A673 (cell line): ENCODE measurements at regions of chr22 and their contacts with region 1.

Region 1: DNA sequence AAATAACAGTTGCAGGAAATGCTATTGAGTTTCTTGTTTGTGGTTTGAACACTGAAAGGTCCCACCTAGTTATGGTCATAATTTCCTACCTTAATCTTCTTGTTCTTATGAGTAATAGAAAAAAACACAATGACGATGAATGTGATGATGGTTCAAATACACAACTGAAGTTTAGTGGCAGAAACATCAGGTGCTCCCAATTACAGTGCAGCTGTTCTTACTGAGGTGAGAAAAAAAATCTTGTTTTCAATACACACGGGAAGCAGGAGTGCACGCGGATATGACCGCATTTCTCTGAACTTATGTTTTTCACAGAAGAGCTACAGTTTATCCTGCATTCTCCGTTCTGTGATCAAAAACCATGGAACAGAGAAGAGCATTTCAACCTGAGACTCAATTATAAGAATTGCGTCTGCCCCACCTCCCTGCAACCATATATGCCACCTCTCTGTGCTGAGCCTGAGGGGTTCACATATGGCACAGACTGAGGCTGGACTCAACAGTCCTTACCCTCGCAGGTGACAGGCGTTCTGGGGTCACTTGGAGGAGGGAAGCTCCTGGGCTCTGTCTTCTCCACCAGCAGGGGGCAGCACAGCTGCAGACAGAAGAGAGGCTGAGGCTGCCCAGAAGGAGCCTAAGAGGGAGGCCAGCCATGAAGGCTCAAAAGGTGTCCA is 99.7 kb upstream of the IGLL5 start:
- DNase-seq: peak; percentile 64
- H3K4me3 ChIP-seq: no peak overlapping the region
- H3K27ac ChIP-seq: no peak overlapping the region
- H3K4me1 ChIP-seq: no peaks in the 10 kb centered on the region
- H3K27me3 ChIP-seq: peaks cover 14% of the 10 kb centered on the region
- CTCF ChIP-seq: peak; percentile 94

Region 2: DNA sequence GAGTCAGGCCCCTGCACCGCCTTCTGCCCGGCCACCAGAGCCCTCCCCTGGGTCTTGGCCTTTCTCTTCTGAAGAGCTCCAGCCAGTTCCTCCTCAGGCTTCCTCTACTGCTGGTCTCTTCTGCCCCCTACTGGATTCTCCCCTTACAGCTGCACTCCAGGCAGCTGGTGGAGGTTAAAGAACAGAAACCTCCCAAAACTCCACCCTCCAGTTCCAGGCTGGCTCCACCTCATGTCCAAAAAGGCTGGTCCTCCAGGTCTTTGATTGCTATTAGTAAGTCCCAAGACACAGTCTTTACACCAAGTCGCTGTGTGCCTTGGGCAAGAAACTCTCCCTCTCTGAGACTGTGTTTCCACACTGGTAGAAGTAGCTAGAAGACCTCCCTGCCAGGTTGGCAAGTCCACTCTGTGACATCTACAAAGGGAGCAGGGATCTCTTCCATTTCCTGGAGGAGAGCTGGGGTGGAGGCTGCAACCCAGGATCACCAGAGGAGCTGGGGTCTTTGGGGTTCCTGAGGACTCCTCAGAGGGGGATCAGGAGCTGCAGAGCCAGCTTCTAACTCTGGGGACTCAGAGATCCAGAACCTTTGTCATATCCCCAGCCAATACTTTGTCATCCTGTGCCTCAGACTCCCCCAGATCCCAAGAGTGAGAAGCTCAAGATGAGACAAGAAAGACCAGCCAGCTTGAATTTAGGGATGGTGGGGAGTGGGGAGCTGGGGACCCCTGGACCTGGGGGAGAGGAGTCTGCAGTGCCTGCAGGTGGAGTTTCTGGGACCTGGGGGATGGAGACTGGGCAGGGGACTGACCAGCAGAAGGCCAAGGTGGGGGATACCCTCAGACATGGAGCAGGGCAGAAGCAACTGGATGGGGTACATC is 96.3 kb after region 1 on chr22:
- CTCF ChIA-PET with region 1: interaction called, 14 read pairs
- POLR2A ChIA-PET with region 1: no interaction called
- intact Hi-C with region 1: no loop called
- DNase-seq: peak; percentile 65
- H3K4me3 ChIP-seq: no peak overlapping the region
- H3K27ac ChIP-seq: no peak overlapping the region
- H3K4me1 ChIP-seq: no peaks in the 10 kb centered on the region
- H3K27me3 ChIP-seq: peaks cover 3% of the 10 kb centered on the region
- CTCF ChIP-seq: peak; percentile 74

Region 3: DNA sequence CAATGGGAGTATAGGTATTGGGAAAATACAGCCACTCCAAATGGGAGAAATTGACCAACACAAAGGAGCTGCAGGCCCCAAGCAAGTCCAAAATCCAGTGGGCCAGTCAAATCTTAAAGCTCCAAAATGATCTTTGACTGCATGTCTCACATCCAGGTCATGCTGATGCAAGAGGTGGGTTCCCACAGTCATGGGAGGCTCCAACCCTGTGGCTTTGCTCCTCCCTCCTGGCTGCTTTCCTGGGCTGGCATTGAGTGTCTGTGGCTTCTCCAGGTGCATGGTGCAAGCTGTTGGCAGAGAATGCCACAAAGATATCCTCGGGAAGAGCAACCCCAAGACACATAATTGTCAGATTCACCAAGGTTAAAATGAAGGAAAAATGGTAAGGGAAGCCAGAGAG is 180.4 kb after region 1 on chr22:
- CTCF ChIA-PET with region 1: no interaction called
- POLR2A ChIA-PET with region 1: interaction called, 12 read pairs
- intact Hi-C with region 1: no loop called
- DNase-seq: no peak
- H3K4me3 ChIP-seq: no peak overlapping the region
- H3K27ac ChIP-seq: no peak overlapping the region
- H3K4me1 ChIP-seq: no peaks in the 10 kb centered on the region
- H3K27me3 ChIP-seq: peaks cover 25% of the 10 kb centered on the region
- CTCF ChIP-seq: no peak